Left ventricle myocardium inferior (tissue), 1 donor: ENCODE measurements at regions of chr19 and their contacts with region 1.

Region 1: DNA sequence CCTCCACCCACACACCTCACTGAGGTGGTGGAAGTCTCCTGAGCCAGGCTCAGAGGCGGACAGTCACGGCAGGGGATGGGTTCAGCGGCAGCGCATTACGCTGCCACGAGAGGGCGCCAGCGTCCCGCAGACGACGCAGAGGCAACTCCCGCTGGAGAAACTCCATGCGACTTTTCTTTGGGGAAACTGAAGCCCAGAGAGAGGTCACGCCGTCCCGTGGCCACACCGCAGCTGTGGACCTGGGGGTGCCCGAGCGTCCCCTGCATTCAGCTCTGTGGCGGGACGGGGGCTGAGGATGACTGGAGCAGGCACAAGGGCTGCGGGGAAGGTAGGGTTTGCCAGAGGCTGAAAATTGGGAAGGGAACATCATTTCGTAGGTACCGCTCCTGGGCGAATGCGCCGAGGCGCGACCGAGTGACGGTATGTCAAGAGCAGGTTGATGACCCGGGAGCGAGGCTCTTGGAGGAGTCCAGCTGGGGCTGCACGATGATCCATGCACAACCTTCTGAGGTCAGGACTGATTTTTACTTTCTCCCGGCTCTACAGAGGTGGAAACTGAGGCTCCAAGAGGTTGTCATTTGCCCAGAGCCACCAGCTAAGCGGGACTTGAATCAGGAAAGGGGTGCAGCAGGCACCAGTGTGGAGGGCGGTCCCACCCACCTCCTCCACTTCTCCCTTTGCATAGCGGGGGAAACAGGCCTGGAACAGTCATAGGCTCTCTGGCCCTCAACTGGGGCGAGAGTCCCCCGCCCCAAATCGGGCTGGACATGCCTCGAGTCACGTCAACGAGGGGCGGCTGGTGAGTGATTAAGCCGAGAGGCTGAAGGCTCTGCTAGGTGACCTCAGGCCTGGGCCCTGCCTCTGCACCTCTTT is 690 bp upstream of the ARRDC2 start:
- DNase-seq: peak; percentile 81
- H3K4me3 ChIP-seq: peak overlapping the region; percentile 67
- H3K27ac ChIP-seq: peak overlapping the region; percentile 90
- H3K4me1 ChIP-seq: peaks cover 64% of the 10 kb centered on the region
- H3K27me3 ChIP-seq: peaks cover 10% of the 10 kb centered on the region
- CTCF ChIP-seq: peak; percentile 98

Region 2: GRCh38 chr19:17966550-17967256 is 40.6 kb before region 1 on chr19 and contains the start of gene KCNN1:
- intact Hi-C with region 1: no loop called
- DNase-seq: no peak
- H3K4me3 ChIP-seq: peak within 1 kb of the TSS; percentile 23
- H3K27ac ChIP-seq: no peak within 1 kb of the TSS
- H3K4me1 ChIP-seq: peaks cover 7% of the 10 kb centered on the region
- H3K27me3 ChIP-seq: peaks cover 95% of the 10 kb centered on the region
- CTCF ChIP-seq: no peak
- total RNA-seq, gene KCNN1: 0.38 TPM

Region 3: GRCh38 chr19:18044825-18045304 is 37.6 kb after region 1 on chr19:
- intact Hi-C with region 1: loop called (anchors 5 kb)
- DNase-seq: peak; percentile 74
- H3K4me3 ChIP-seq: peak overlapping the region; percentile 62
- H3K27ac ChIP-seq: peak overlapping the region; percentile 88
- H3K4me1 ChIP-seq: peaks cover 39% of the 10 kb centered on the region
- H3K27me3 ChIP-seq: no peaks in the 10 kb centered on the region
- CTCF ChIP-seq: no peak

Region 4: DNA sequence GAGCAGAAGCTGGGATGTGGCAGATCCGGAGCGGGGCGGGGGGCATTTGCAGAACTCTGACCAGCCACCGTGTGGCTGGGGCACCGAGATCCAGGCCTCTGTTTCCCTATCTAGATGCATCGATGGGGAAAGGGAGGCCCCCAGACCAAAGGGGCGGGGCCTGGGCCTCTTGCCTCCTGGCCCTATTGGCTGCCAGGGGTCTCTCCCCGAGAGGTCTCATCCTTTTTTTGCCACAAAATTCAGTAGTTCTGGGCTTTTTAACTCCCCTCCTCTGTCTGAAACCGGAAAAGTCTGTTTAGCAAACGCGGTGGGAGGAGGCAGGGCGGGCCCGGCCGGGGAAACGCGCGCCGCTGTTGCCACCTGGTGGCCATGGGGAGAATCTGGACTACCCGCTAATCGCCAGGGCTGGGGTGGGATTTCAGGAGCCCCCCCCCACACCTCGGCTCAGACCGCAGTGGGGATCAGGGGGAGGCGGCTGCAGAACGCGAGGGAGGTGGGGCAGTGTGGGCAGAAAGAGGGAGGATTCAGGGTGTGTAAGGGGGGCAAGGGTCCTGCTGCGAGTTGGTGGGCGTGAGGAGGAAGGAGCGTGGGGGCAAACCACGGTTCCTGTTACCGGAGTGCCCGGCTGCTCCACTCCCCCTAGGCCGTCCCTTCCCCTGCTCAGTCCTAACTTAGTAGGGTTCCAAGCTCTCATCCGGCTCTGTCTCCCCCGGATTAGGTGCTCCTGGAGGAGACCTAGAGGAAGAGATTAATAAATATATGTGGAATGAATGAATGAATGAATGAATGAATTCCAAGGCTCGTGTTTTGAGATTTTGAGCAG is 51.1 kb after region 1 on chr19:
- intact Hi-C with region 1: loop called (anchors 2 kb)
- DNase-seq: peak; percentile 82
- H3K4me3 ChIP-seq: peak overlapping the region; percentile 51
- H3K27ac ChIP-seq: peak overlapping the region; percentile 91
- H3K4me1 ChIP-seq: peaks cover 15% of the 10 kb centered on the region
- H3K27me3 ChIP-seq: peaks cover 17% of the 10 kb centered on the region
- CTCF ChIP-seq: peak; percentile 94